HEK293 (cell line): ENCODE measurements at regions of chr2 and their contacts with region 1.

Region 1: GRCh38 chr2:17309741-17310339 is 208.4 kb downstream of the RAD51AP2 start:
- H3K4me3 ChIP-seq: no peak overlapping the region
- H3K27ac ChIP-seq: no peak overlapping the region
- H3K4me1 ChIP-seq: no peaks in the 10 kb centered on the region
- CTCF ChIP-seq: peak; percentile 34; the same call in 1 of the 2 replicates

Region 2: DNA sequence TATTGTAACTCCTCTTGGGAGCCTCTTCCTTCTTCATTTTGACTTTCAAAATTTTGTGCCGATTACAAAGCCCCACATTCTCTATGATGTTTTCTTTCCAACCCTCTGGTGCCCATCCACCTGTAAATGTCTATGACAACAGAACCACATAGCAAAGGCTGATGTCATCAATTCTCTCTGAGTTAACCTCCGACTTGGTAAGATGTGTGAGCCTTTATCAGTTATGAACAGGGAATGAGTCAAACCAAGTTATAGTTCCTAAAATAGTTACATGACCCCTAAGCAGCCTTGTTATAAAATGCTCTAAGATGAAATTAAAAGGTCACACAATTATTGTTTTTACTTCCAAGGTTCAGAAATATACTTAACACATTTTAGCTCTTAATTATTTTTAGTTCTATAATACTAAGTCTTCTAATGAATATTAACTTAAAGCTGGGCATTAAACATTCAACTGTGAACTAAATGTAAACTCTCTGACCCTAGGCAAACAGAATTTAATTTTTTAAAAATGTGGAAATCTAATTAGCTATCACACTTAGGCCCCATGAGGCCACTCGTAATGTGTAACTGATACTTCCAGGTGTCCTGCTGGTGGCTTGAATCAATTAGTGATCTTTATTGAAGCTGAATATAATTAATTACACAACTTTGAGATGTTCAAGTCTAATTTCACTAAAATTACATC is 541.9 kb before region 1 on chr2:
- CTCF ChIA-PET with region 1: interaction called, 15 read pairs
- POLR2A ChIA-PET with region 1: no interaction called
- H3K4me3 ChIP-seq: no peak overlapping the region
- H3K27ac ChIP-seq: no peak overlapping the region
- H3K4me1 ChIP-seq: no peaks in the 10 kb centered on the region
- CTCF ChIP-seq: no peak

Region 3: GRCh38 chr2:17287183-17287582 is 22.7 kb before region 1 on chr2:
- CTCF ChIA-PET with region 1: interaction called, 10 read pairs
- POLR2A ChIA-PET with region 1: no interaction called
- H3K4me3 ChIP-seq: no peak overlapping the region
- H3K27ac ChIP-seq: no peak overlapping the region
- H3K4me1 ChIP-seq: no peaks in the 10 kb centered on the region
- CTCF ChIP-seq: no peak

Region 4: GRCh38 chr2:17326717-17327116 is 16.9 kb after region 1 on chr2:
- CTCF ChIA-PET with region 1: interaction called, 20 read pairs
- POLR2A ChIA-PET with region 1: no interaction called
- H3K4me3 ChIP-seq: no peak overlapping the region
- H3K27ac ChIP-seq: no peak overlapping the region
- H3K4me1 ChIP-seq: no peaks in the 10 kb centered on the region
- CTCF ChIP-seq: no peak